ENCODE measurements at regions of chr5 and their contacts with region 1.

Region 1: DNA sequence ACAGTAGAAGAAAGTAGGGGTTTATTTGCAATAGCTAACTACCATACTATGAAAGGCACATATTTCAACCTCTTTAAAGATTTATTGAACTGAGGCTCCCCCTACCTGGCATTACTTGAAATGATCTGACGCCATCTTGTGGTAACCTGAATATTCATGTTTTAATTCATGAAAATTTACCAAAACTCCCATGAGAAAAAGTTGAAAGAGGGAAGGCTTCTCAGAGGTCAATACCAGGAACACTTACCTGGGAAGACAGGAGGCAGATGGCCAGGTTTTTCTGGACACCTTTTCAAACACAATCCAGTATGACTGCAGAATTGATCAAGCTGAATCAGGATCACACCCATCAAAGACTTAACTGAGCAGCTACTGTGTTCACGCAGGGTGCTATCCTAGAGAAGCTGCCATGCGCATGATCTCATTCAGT is 9.4 kb downstream of the PRELID2 start:
- DNase-seq: peak; percentile 69
- ATAC-seq: peak; percentile 84
- H3K4me3 ChIP-seq: no peak overlapping the region
- H3K27ac ChIP-seq: no peak overlapping the region
- H3K4me1 ChIP-seq: peaks cover 4% of the 10 kb centered on the region
- H3K27me3 ChIP-seq: no peaks in the 10 kb centered on the region
- CTCF ChIP-seq: peak; percentile 98
- POLR2A ChIP-seq: 0 out of 2 replicates have a peak, but pooled peaks have one; percentile 26
- RAD21 ChIP-seq: peak; percentile 81

Region 2: DNA sequence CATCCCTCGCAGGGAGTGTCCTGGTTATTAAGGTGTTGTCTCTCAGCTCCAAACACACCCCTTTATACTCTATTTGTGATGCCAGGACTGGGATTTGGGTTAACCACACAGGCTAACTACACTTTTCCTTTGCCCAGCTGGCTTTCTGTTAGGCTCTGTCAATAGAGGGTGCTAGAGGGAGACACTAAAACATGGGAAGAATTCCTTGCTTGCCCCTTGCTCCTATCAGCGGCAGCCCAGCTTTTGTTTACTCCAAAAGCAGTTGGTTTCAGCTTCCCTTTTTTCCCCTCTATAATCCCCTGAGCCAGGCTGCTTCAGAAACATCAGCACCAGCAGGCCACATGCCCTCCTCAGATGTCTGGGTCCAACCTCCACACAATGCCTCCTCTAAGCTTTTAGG is 1358.0 kb before region 1 on chr5:
- CTCF ChIA-PET with region 1: no interaction called
- POLR2A ChIA-PET with region 1: no interaction called
- dilution Hi-C with region 1: no loop called
- in situ Hi-C with region 1: no loop called
- intact Hi-C with region 1: loop called (anchors 10 kb)
- DNase-seq: peak; percentile 56
- ATAC-seq: peak; percentile 95
- H3K4me3 ChIP-seq: no peak overlapping the region
- H3K27ac ChIP-seq: no peak overlapping the region
- H3K4me1 ChIP-seq: no peaks in the 10 kb centered on the region
- H3K27me3 ChIP-seq: no peaks in the 10 kb centered on the region; the same call in 1 of the 2 replicates
- CTCF ChIP-seq: peak; percentile 72
- POLR2A ChIP-seq: no peak
- RAD21 ChIP-seq: peak; percentile 65

Region 3: DNA sequence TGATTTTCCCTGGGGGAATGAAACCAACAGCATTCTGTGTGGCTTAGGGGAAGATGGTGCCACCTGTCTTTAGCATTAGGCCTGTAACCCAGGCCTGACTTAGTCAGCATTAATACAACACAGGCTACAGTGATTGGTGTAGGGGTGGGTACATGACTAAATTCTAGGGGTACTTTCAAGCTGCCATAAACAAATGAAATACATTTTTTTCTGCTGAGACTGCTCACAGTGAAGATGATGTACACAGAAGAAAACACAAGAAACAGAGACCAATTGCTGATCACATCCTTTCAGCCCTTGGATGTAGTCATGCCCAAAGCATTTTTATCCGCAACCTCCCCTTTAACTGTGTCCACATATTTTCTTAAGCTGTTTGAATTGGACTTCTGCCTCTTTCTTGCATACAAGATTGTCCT is 1127.9 kb before region 1 on chr5:
- CTCF ChIA-PET with region 1: no interaction called
- POLR2A ChIA-PET with region 1: no interaction called
- dilution Hi-C with region 1: no loop called
- in situ Hi-C with region 1: no loop called
- intact Hi-C with region 1: loop called (anchors 10 kb)
- DNase-seq: peak; percentile 97
- ATAC-seq: peak; percentile 97
- H3K4me3 ChIP-seq: no peak overlapping the region
- H3K27ac ChIP-seq: no peak overlapping the region
- H3K4me1 ChIP-seq: peaks cover 2% of the 10 kb centered on the region; the same call in 1 of the 2 replicates
- H3K27me3 ChIP-seq: no peaks in the 10 kb centered on the region
- CTCF ChIP-seq: peak; percentile 36
- POLR2A ChIP-seq: no peak
- RAD21 ChIP-seq: peak; percentile 5; the same call in 1 of the 2 replicates

Region 4: GRCh38 chr5:145362261-145362660 is 463.5 kb before region 1 on chr5:
- CTCF ChIA-PET with region 1: no interaction called
- POLR2A ChIA-PET with region 1: no interaction called
- dilution Hi-C with region 1: no loop called
- in situ Hi-C with region 1: no loop called
- intact Hi-C with region 1: loop called (anchors 5 kb)
- DNase-seq: peak; percentile 93
- ATAC-seq: peak; percentile 84
- H3K4me3 ChIP-seq: no peak overlapping the region
- H3K27ac ChIP-seq: peak overlapping the region; percentile 99
- H3K4me1 ChIP-seq: peaks cover 14% of the 10 kb centered on the region
- H3K27me3 ChIP-seq: no peaks in the 10 kb centered on the region
- CTCF ChIP-seq: no peak
- POLR2A ChIP-seq: no peak
- RAD21 ChIP-seq: no peak

Region 5: DNA sequence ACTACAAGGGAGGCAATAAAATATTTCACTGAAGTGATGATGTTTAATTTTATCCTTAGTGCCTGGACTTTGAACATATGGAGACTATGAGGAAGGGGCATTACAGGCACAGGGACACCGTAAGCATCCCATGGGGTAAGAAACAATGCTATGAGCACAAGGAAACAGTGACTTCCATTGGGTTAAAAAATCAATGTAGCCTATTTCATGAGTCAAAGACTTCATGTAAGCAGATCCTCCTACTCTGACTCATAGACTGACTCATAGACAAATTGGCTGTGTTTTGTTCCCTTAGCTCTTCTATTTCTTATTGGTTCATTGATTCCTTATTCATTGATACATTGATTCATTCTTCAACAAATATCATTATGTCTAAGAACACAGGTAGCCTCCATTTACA is 341.6 kb before region 1 on chr5:
- CTCF ChIA-PET with region 1: no interaction called
- POLR2A ChIA-PET with region 1: no interaction called
- dilution Hi-C with region 1: no loop called
- in situ Hi-C with region 1: no loop called
- intact Hi-C with region 1: loop called (anchors 10 kb)
- DNase-seq: peak; percentile 92
- ATAC-seq: peak; percentile 74
- H3K4me3 ChIP-seq: no peak overlapping the region
- H3K27ac ChIP-seq: no peak overlapping the region
- H3K4me1 ChIP-seq: peaks cover 8% of the 10 kb centered on the region
- H3K27me3 ChIP-seq: no peaks in the 10 kb centered on the region
- CTCF ChIP-seq: no peak
- POLR2A ChIP-seq: no peak
- RAD21 ChIP-seq: no peak

Region 6: GRCh38 chr5:145697251-145697990 is 128.3 kb before region 1 on chr5:
- CTCF ChIA-PET with region 1: interaction called, 4 read pairs
- POLR2A ChIA-PET with region 1: no interaction called
- dilution Hi-C with region 1: no loop called
- in situ Hi-C with region 1: no loop called
- intact Hi-C with region 1: loop called (anchors 5 kb)
- DNase-seq: peak; percentile 49
- ATAC-seq: peak; percentile 73
- H3K4me3 ChIP-seq: no peak overlapping the region
- H3K27ac ChIP-seq: no peak overlapping the region
- H3K4me1 ChIP-seq: no peaks in the 10 kb centered on the region
- H3K27me3 ChIP-seq: no peaks in the 10 kb centered on the region
- CTCF ChIP-seq: peak; percentile 47
- POLR2A ChIP-seq: no peak
- RAD21 ChIP-seq: peak; percentile 53